IMR-90 (cell line): ENCODE measurements at regions of chr2 and their contacts with region 1.

Region 1: DNA sequence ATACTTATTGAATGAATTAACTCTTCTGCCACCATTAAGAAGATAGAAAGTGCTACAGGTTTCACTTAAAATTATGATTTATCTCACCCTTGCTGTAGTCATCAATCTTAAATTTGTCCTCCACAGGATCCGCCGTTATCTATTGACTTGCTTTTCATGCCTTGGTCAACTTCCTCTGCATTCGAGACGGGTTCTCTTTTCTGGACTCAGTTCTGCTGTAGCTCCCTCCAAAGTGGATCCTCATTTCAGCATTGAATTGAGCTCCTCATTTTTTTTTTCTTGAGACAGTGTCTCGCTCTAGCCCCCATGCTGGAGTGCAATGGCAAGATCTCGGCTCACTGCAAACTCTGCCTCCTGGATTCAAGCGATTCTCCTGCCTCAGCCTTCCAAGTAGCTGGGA is 27.6 kb downstream of the INPP5D start:
- DNase-seq: no peak
- ATAC-seq: no peak
- H3K4me3 ChIP-seq: no peak overlapping the region
- H3K27ac ChIP-seq: no peak overlapping the region
- H3K4me1 ChIP-seq: no peaks in the 10 kb centered on the region
- H3K27me3 ChIP-seq: peaks cover 15% of the 10 kb centered on the region
- CTCF ChIP-seq: no peak
- POLR2A ChIP-seq: no peak
- RAD21 ChIP-seq: no peak

Region 2: GRCh38 chr2:232588680-232589585 is 498.8 kb before region 1 on chr2:
- CTCF ChIA-PET with region 1: no interaction called
- POLR2A ChIA-PET with region 1: no interaction called
- dilution Hi-C with region 1: no loop called
- in situ Hi-C with region 1: no loop called
- intact Hi-C with region 1: no loop called
- DNase-seq: peak; percentile 86
- ATAC-seq: peak; percentile 97
- H3K4me3 ChIP-seq: no peak overlapping the region
- H3K27ac ChIP-seq: no peak overlapping the region
- H3K4me1 ChIP-seq: peaks cover 3% of the 10 kb centered on the region
- H3K27me3 ChIP-seq: no peaks in the 10 kb centered on the region
- CTCF ChIP-seq: no peak
- POLR2A ChIP-seq: no peak
- RAD21 ChIP-seq: no peak

Region 3: GRCh38 chr2:232999354-232999753 is 88.4 kb before region 1 on chr2:
- CTCF ChIA-PET with region 1: no interaction called
- POLR2A ChIA-PET with region 1: no interaction called
- dilution Hi-C with region 1: no loop called
- in situ Hi-C with region 1: no loop called
- intact Hi-C with region 1: no loop called
- DNase-seq: no peak
- ATAC-seq: no peak
- H3K4me3 ChIP-seq: no peak overlapping the region
- H3K27ac ChIP-seq: no peak overlapping the region
- H3K4me1 ChIP-seq: no peaks in the 10 kb centered on the region
- H3K27me3 ChIP-seq: peaks cover 14% of the 10 kb centered on the region
- CTCF ChIP-seq: no peak
- POLR2A ChIP-seq: no peak
- RAD21 ChIP-seq: no peak

Region 4: DNA sequence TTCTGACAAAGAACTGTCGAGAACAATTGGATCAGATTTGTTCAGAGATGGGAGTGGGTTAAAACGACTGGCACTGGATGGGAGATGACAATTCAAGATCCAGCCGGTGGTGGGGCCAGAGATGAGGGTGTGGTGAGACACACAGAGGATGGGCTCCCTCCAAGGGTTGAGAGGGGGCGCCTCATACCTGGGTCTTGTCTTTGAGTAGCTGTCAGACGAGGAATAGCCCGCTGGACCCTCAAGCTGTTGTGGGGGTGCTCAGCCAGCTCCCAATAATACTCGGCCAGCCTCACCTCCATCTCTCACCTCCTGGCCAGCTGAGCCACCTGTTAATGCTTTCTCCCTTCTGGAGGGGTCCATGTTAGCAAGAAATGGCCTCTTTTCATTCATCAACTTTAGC is 13.6 kb before region 1 on chr2:
- CTCF ChIA-PET with region 1: no interaction called
- POLR2A ChIA-PET with region 1: interaction called, 11 read pairs
- dilution Hi-C with region 1: no loop called
- in situ Hi-C with region 1: no loop called
- intact Hi-C with region 1: no loop called
- DNase-seq: no peak
- ATAC-seq: no peak
- H3K4me3 ChIP-seq: no peak overlapping the region
- H3K27ac ChIP-seq: no peak overlapping the region
- H3K4me1 ChIP-seq: no peaks in the 10 kb centered on the region
- H3K27me3 ChIP-seq: peaks cover 6% of the 10 kb centered on the region
- CTCF ChIP-seq: no peak
- POLR2A ChIP-seq: no peak
- RAD21 ChIP-seq: no peak

Region 5: GRCh38 chr2:234324116-234324515 is 1236.4 kb after region 1 on chr2:
- CTCF ChIA-PET with region 1: no interaction called
- POLR2A ChIA-PET with region 1: no interaction called
- dilution Hi-C with region 1: no loop called
- in situ Hi-C with region 1: no loop called
- intact Hi-C with region 1: no loop called
- DNase-seq: no peak
- ATAC-seq: no peak
- H3K4me3 ChIP-seq: no peak overlapping the region
- H3K27ac ChIP-seq: no peak overlapping the region
- H3K4me1 ChIP-seq: no peaks in the 10 kb centered on the region
- H3K27me3 ChIP-seq: peaks cover 11% of the 10 kb centered on the region
- CTCF ChIP-seq: no peak
- POLR2A ChIP-seq: no peak
- RAD21 ChIP-seq: no peak